ENCODE measurements at regions of chr17 and their contacts with region 1.

Region 1: GRCh38 chr17:1752425-1753262 is 9.2 kb upstream of the SERPINF1 start:
- DNase-seq: no peak
- ATAC-seq: peak; percentile 11 to 68 (median 51)
- H3K4me3 ChIP-seq: peak overlapping the region in 1 of 10 donors; percentile 26
- H3K27ac ChIP-seq: peak overlapping the region in 2 of 10 donors; percentile 19 to 85
- H3K4me1 ChIP-seq: peaks cover 0 to 27% (median 0%) of the 10 kb centered on the region in 9 donors
- H3K27me3 ChIP-seq: no peaks in the 10 kb centered on the region
- CTCF ChIP-seq: no peak

Region 2: GRCh38 chr17:3104322-3104721 is 1351.7 kb after region 1 on chr17 and contains the start of gene OR1D2:
- intact Hi-C with region 1: loop called in 1 of 10 experiments (anchors 10 kb)
- DNase-seq: no peak
- ATAC-seq: no peak
- H3K4me3 ChIP-seq: no peak within 1 kb of the TSS
- H3K27ac ChIP-seq: no peak within 1 kb of the TSS
- H3K4me1 ChIP-seq: no peaks in the 10 kb centered on the region
- H3K27me3 ChIP-seq: peaks cover 0 to 8% (median 0%) of the 10 kb centered on the region in 7 donors
- CTCF ChIP-seq: no peak
- total RNA-seq, gene OR1D2: not detected

Measured in heart right ventricle (tissue), 16 donors.